ENCODE measurements at regions of chr19 and their contacts with region 1.

Region 1: DNA sequence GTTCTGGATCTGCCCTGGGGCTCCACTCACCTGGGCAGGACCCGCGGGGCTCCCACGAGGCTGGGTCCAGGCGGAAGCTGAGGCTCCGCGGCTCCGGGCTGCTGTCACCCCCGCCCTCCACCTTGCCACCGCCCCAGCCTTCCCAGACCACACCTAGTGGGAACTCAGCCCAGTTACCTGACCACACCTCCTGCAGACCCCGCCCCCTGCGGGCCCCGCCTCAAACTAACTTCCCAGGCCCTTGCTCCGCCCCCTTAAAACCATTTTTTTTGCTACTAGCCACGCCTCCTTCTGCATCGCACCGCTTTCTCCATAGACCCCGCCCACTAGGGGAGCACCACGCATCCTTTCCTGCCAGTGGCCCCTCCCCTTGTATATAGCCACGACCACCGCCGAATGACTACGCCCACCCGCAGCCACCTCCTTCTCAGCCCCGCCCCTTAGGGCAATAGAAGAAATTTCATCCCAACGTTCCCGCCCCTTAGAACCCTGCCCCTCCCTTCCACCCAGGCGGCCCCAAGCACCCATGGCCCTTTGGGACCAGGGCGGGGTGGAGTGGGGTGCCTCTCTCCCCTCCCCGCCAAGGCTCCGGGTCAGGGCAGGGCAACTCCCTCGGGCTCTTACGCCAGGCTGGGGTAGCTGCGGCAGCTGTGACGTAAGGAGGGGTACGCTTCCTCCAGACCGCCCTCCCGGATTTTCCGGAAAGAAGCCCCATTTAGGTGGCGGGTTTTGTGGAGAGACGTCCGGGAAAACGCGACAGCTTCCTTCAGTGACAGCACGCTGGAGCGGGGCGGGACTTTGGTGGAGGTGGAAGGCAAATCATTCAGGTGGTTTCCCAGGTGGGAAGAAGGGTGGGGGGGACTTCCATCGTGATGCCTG is at the start of gene SH2D3A:
- DNase-seq: peak; percentile 97
- H3K4me3 Mint-ChIP-seq: peak within 1 kb of the TSS; percentile 89
- H3K27ac Mint-ChIP-seq: peak within 1 kb of the TSS; percentile 93
- H3K4me1 Mint-ChIP-seq: peaks cover 60% of the 10 kb centered on the region
- H3K27me3 Mint-ChIP-seq: no peaks in the 10 kb centered on the region
- total RNA-seq, gene SH2D3A: 31.5 to 35.2 TPM

Region 2: GRCh38 chr19:6654347-6655310 is 113.0 kb before region 1 on chr19:
- CTCF ChIA-PET with region 1: no interaction called
- POLR2A ChIA-PET with region 1: no interaction called
- DNase-seq: peak; percentile 66
- H3K4me3 Mint-ChIP-seq: peak overlapping the region; percentile 75
- H3K27ac Mint-ChIP-seq: peak overlapping the region; percentile 98
- H3K4me1 Mint-ChIP-seq: peaks cover 67% of the 10 kb centered on the region
- H3K27me3 Mint-ChIP-seq: no peaks in the 10 kb centered on the region

Region 3: DNA sequence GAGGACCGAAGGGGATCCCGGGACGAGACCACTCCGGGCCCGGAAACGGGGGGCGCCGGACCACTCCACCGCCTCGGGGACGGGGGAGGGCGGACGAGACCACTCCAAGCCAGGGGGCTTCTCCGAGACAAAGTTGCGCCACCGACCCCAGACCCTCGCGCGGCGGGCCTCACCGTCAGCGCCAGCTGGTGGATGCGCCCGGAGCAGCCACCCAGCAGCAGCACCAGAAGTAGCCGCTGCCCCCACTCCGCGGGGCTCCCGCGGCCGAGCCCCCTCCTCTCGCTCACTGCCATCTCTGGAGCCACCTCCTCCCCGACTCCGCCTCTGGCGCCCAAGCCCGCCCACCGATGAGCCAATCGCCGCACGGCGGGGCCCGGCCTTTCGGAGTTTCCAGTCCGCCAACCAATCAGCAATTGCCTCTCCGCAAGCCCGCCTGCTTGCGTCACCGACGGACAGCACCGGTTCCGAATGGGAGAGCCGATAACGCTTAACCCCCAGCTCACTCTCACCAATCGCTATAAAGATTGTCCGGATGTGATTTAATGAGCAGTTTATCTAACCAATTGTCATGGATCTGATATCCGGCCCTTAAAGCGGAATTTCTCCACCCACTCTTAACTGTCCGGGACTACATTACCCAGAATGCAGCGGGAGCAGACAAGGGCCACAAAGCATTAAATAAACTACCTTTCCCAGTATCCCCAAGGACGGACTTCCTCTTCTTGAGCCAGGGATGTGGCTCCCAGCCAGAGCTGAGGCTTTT is 30.1 kb before region 1 on chr19 and contains the start of gene GPR108:
- CTCF ChIA-PET with region 1: interaction called, 10 read pairs
- POLR2A ChIA-PET with region 1: no interaction called
- DNase-seq: peak; percentile 100
- H3K4me3 Mint-ChIP-seq: peak within 1 kb of the TSS; percentile 95
- H3K27ac Mint-ChIP-seq: peak within 1 kb of the TSS; percentile 99
- H3K4me1 Mint-ChIP-seq: peaks cover 39% of the 10 kb centered on the region
- H3K27me3 Mint-ChIP-seq: no peaks in the 10 kb centered on the region
- total RNA-seq, gene GPR108: 64.6 TPM

Region 4: DNA sequence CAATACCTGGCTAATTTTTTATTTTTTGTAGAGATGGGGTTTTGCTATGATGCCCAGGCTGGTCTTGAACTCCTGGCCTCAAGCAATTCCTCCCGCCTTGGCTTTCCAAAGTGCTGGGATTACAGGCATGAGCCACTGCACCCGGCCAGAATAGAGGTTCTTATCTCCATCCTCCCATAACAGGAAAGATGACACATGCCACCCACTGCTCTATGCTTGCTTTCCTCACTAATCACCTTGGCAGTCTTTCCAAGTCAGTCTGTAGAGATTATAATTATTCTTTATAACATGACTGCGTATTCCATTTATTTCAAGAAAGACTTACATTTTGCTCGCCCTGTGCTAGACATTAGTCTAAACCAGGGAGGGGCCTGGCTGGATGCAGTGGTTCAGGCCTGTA is 11.6 kb after region 1 on chr19:
- CTCF ChIA-PET with region 1: interaction called, 10 read pairs
- POLR2A ChIA-PET with region 1: interaction called, 3 read pairs
- DNase-seq: no peak
- H3K4me3 Mint-ChIP-seq: no peak overlapping the region
- H3K27ac Mint-ChIP-seq: peak overlapping the region; percentile 11
- H3K4me1 Mint-ChIP-seq: peaks cover 60% of the 10 kb centered on the region
- H3K27me3 Mint-ChIP-seq: no peaks in the 10 kb centered on the region

Region 5: GRCh38 chr19:6801485-6802086 is 34.0 kb after region 1 on chr19:
- CTCF ChIA-PET with region 1: interaction called, 26 read pairs
- POLR2A ChIA-PET with region 1: interaction called, 4 read pairs
- DNase-seq: peak; percentile 90
- H3K4me3 Mint-ChIP-seq: peak overlapping the region; percentile 70
- H3K27ac Mint-ChIP-seq: peak overlapping the region; percentile 89
- H3K4me1 Mint-ChIP-seq: peaks cover 61% of the 10 kb centered on the region
- H3K27me3 Mint-ChIP-seq: no peaks in the 10 kb centered on the region

Region 6: GRCh38 chr19:6862673-6863078 is 95.1 kb after region 1 on chr19:
- CTCF ChIA-PET with region 1: interaction called, 13 read pairs
- POLR2A ChIA-PET with region 1: no interaction called
- DNase-seq: peak; percentile 93
- H3K4me3 Mint-ChIP-seq: peak overlapping the region; percentile 79
- H3K27ac Mint-ChIP-seq: peak overlapping the region; percentile 79
- H3K4me1 Mint-ChIP-seq: peaks cover 22% of the 10 kb centered on the region
- H3K27me3 Mint-ChIP-seq: no peaks in the 10 kb centered on the region